Left colon (tissue), 2 donors: ENCODE measurements at regions of chr4 and their contacts with region 1.

Region 1: GRCh38 chr4:94127707-94128328 is 79.8 kb upstream of the SMARCAD1 start:
- DNase-seq: no peak
- ATAC-seq: peak; percentile 77

Region 2: GRCh38 chr4:93791570-93792195 is 336.1 kb before region 1 on chr4:
- intact Hi-C with region 1: loop called in 1 of 2 experiments (anchors 2 kb)
- DNase-seq: peak; percentile 28 to 62
- ATAC-seq: peak; percentile 75

Region 3: GRCh38 chr4:94214703-94215319 is 87.0 kb after region 1 on chr4:
- intact Hi-C with region 1: no loop called
- DNase-seq: no peak
- ATAC-seq: no peak